ENCODE measurements at regions of chr2 and their contacts with region 1.

Region 1: DNA sequence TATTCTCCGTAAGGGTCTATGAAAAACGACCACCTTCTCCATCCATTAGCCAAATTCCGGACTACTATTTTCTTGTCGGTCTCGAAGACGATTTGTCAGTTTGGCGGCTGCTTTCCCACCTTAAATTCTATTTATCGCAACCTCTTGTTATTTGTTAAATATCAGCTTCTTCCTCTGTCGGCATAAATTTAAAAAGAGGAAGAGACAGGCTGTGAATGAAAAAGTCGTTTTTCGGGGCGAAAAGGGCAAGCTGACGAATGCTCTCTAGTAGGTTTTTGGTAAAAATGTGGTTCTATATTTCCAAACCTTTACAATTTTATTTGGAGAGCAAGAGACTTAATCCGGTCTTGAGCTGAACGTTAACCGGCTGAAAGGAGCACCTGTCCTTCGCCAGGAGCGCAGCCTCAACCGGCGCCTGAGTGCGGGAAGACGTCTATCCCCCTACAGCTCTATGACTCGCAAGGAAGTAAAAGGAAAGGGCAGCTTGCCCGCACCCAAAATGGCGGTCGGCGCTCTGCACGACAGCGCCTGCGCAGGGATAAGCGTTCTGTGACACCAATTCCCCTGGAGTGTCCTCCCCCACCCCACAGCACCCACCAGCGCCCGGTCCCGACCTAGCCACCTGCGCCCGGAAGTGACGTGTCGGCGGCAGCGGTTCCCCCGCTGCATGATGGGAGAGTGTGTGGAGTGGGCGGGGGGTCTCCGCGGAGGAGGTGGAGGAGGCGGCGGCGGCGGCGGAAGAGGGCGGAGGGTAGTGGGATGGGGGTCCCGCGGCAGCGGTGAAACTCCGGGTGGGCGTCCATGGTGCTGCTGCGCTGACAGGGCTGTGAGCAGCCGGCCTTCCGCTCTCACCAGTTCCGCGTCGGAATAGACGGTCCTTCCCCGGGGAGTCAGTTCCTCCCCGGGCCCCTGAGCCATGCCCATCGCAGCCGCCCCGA is at the start of gene AFTPH:
- DNase-seq: peak; percentile 97 to 100 (median 98)

Region 2: DNA sequence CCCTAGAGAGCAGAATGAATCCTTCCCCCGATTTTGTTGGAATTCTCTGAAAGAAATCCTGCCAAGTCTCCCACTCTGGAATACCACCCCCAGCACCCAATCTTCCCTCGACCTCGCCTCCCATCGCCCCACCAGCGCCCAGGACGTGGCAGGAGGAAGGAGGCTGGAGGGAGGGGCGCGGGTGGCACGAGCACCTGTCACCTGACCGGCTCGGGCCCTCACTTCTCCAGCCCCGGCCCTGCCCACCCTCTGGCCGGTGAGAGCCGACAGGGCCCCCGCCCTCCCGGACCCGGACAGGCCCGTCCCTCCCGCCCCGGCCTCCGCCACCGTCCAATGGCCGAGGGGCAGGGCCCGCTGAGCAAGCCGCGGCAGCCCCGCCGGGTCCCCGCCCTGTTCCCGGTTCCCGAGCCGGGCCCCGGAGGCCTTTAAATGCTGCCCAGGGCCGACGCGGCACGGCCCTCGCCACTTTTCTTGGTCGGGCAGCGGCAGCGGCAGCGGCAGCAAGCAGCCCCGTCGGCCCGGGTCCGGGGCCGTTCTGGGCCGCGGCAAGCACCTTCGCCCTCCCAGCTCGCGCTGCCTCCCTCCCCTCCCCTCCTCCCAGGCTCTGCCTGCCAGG is 70.1 kb before region 1 on chr2 and contains the start of gene LGALSL:
- intact Hi-C with region 1: loop called (anchors 1 kb)
- DNase-seq: peak; percentile 33 to 93 (median 59)

Region 3: GRCh38 chr2:64653349-64654062 is 129.6 kb after region 1 on chr2 and contains the start of gene SERTAD2:
- intact Hi-C with region 1: loop called (anchors 2 kb)
- DNase-seq: peak; percentile 69 to 98 (median 81)

Region 4: GRCh38 chr2:64767670-64768468 is 243.9 kb after region 1 on chr2:
- intact Hi-C with region 1: loop called (anchors 5 kb)
- DNase-seq: peak; percentile 74 to 97 (median 85)

Region 5: GRCh38 chr2:64988420-64989125 is 464.6 kb after region 1 on chr2:
- intact Hi-C with region 1: loop called (anchors 5 kb)
- DNase-seq: peak; percentile 27 to 91 (median 54)

Region 6: GRCh38 chr2:65031341-65032018 is 507.5 kb after region 1 on chr2:
- intact Hi-C with region 1: no loop called
- DNase-seq: no peak